ENCODE measurements at regions of chr5 and their contacts with region 1.

Region 1: GRCh38 chr5:100858987-100859545 is 44.0 kb downstream of the ST8SIA4 start:
- DNase-seq: no peak
- H3K4me3 ChIP-seq: no peak overlapping the region
- H3K4me3 Mint-ChIP-seq: no peak overlapping the region
- H3K27ac ChIP-seq: no peak overlapping the region
- H3K27ac Mint-ChIP-seq: peak overlapping the region in 1 of 7 donors; percentile 5
- H3K4me1 ChIP-seq: peaks cover 47% of the 10 kb centered on the region
- H3K4me1 Mint-ChIP-seq: peaks cover 47 to 68% (median 50%) of the 10 kb centered on the region in 4 donors
- H3K27me3 ChIP-seq: no peaks in the 10 kb centered on the region
- H3K27me3 Mint-ChIP-seq: no peaks in the 10 kb centered on the region

Region 2: DNA sequence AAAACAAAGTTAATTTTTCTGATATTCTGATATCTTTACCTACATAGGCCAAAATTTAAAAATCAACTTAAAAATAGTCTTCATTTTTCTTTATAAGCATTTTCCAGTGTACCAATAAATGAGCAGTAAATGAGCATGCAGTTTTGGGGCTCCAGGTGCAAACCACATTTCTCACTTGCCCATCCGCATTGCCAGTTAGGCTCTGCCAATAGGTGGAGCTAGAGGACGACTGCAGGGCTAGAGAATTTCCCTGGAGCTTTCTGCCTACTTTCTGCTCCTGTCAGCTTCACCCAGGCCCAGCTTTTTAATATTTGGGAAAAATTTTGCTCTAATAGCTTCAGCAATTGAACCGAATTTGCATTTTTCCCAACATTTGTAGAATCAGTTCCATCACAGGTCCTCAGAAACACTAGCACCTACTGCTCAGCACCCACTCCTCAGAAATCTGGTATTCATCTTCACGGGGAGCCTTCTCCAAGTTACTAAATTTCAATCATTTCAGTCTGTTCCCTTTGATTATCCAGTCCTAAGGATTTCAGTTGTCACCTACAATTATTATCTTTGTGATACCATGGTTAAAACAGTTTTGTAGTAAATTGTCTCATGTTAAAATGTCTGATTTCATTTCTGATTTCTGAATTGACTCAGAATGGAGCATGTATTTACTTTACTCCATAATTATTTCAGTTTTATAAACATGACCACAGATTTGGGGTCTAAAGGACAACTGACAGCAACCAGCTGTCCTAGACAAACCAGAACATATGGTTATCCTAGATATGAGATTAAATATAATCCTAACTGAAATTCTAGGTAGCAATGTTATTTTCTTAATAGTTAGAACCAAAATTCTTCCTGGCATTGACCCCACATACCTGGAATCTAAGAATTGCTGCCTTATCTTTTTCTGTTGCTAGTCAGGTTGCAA is 428.5 kb before region 1 on chr5:
- CTCF ChIA-PET with region 1: no interaction called
- POLR2A ChIA-PET with region 1: no interaction called
- intact Hi-C with region 1: no loop called
- DNase-seq: peak; percentile 16 to 29 (median 24)
- H3K4me3 ChIP-seq: no peak overlapping the region
- H3K4me3 Mint-ChIP-seq: no peak overlapping the region
- H3K27ac ChIP-seq: no peak overlapping the region
- H3K27ac Mint-ChIP-seq: no peak overlapping the region
- H3K4me1 ChIP-seq: no peaks in the 10 kb centered on the region
- H3K4me1 Mint-ChIP-seq: no peaks in the 10 kb centered on the region
- H3K27me3 ChIP-seq: no peaks in the 10 kb centered on the region
- H3K27me3 Mint-ChIP-seq: no peaks in the 10 kb centered on the region

Region 3: DNA sequence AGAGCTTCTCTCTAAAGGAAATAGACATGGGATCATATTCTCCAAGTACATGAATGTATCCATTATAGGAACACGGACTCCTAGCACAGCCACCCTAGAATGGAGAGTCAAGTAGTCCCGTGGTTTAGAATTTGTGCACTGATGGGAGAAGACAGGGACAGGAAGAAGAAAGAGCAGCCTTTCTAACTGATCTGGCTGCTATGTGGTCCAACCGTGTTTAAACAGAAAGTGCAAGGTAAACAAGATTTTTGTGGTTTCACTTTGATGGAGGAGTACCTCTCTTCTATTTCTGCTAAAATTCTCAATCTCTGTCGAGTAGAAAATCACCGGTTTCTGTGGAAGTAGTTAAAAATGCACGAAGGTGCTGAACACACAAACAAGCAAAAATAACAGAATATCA is 127.3 kb before region 1 on chr5:
- CTCF ChIA-PET with region 1: no interaction called
- POLR2A ChIA-PET with region 1: no interaction called
- intact Hi-C with region 1: no loop called
- DNase-seq: peak; percentile 38 to 66 (median 52)
- H3K4me3 ChIP-seq: peak overlapping the region in 1 of 2 donors; percentile 2
- H3K4me3 Mint-ChIP-seq: peak overlapping the region; percentile 76 to 91 (median 81)
- H3K27ac ChIP-seq: peak overlapping the region; percentile 7
- H3K27ac Mint-ChIP-seq: peak overlapping the region; percentile 70 to 93 (median 89)
- H3K4me1 ChIP-seq: peaks cover 13% of the 10 kb centered on the region
- H3K4me1 Mint-ChIP-seq: peaks cover 5 to 10% (median 8%) of the 10 kb centered on the region in 4 donors
- H3K27me3 ChIP-seq: no peaks in the 10 kb centered on the region
- H3K27me3 Mint-ChIP-seq: no peaks in the 10 kb centered on the region

Region 4: DNA sequence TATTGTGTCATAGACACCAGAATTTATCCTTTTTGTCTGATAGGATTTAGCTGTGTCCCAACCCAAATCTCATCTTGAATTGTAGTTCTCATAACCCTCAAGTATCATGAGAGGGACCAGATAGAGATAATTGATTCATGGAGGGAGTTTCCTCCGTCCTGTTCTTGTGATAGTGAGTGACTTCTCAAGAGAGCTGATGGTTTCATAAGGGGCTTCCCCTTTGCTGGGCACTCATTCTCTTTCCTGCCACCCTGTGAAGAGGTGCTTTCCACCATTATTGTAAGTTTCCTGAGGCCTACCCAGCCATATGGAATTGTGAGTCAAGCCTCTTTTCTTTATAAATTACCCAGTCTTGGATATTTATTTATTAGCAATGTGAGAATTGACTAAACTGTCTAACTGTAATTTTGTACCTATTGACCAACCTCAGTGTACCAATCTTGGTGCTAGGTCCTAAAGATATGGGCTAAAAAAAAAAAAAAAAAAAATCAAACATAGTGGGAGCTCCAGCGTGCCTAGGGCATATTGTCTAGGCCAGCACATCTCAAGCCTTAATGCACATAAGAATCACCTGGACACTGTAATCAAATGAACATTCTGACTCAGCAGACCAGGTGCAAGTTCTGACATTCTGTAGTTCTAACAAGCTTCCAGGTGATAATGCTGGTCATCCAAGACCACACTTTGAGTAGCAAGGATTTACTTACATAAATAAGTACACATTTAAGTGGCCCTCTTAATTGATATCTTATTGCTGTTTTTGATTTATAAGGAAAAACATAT is 13.5 kb after region 1 on chr5:
- CTCF ChIA-PET with region 1: no interaction called
- POLR2A ChIA-PET with region 1: no interaction called
- intact Hi-C with region 1: loop called (anchors 2 kb)
- DNase-seq: no peak
- H3K4me3 ChIP-seq: no peak overlapping the region
- H3K4me3 Mint-ChIP-seq: no peak overlapping the region
- H3K27ac ChIP-seq: no peak overlapping the region
- H3K27ac Mint-ChIP-seq: peak overlapping the region in 4 of 7 donors; percentile 2 to 88 (median 58)
- H3K4me1 ChIP-seq: peaks cover 14% of the 10 kb centered on the region
- H3K4me1 Mint-ChIP-seq: peaks cover 31 to 39% (median 34%) of the 10 kb centered on the region in 4 donors
- H3K27me3 ChIP-seq: no peaks in the 10 kb centered on the region
- H3K27me3 Mint-ChIP-seq: no peaks in the 10 kb centered on the region

Measured in CD4-positive, alpha-beta memory T cell (primary cell).